Endothelial cell of umbilical vein (primary cell): ENCODE measurements at regions of chr3 and their contacts with region 1.

Region 1: DNA sequence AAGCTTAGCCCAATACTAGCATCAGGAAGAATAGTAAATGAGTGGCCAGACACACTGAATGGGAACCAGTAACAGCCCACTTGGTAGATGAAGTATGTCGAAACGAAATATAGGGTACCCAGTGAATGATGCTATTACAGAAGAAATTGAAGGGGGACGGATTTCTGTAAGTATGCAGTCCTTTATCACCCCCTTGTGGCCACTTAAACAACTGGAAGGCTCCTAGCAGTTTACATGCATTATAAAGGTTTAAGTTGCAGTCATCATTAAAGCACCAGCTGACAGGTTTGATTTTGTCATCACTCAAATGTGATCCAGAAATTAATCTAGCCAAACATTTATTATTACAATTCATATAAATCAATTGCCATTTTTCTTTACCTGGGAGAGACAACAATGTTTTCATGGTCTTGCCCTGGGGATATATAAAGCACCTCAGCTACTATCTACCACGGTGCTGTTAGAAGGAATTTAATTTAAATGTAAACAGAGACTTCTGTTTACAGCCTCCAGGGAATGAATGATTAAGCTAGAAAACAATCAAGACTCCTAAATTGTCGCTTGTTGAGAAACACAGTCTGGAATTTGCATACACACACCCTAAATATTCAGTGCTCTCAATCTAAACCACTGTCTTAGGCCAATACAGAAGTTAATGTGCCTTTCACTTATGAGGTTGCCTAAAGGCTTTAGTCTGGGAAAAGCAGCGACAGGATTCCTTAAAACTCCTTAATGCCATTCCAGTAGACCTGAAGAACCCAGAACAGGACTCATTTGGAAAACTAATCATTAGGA is 7.8 kb downstream of the EIF1B start:
- DNase-seq: peak; percentile 64
- H3K4me3 ChIP-seq: no peak overlapping the region
- H3K27ac ChIP-seq: no peak overlapping the region
- H3K4me1 ChIP-seq: no peaks in the 10 kb centered on the region
- H3K27me3 ChIP-seq: no peaks in the 10 kb centered on the region
- CTCF ChIP-seq: peak; percentile 61 to 75
- POLR2A ChIP-seq: no peak

Region 2: GRCh38 chr3:39414421-39414907 is 902.8 kb before region 1 on chr3:
- CTCF ChIA-PET with region 1: no interaction called
- POLR2A ChIA-PET with region 1: no interaction called
- dilution Hi-C with region 1: no loop called
- intact Hi-C with region 1: loop called (anchors 10 kb)
- DNase-seq: no peak
- H3K4me3 ChIP-seq: no peak overlapping the region
- H3K27ac ChIP-seq: no peak overlapping the region
- H3K4me1 ChIP-seq: peaks cover 5% of the 10 kb centered on the region
- H3K27me3 ChIP-seq: no peaks in the 10 kb centered on the region
- CTCF ChIP-seq: no peak
- POLR2A ChIP-seq: peak; percentile 85

Region 3: GRCh38 chr3:39990532-39990931 is 326.7 kb before region 1 on chr3:
- CTCF ChIA-PET with region 1: no interaction called
- POLR2A ChIA-PET with region 1: no interaction called
- dilution Hi-C with region 1: no loop called
- intact Hi-C with region 1: loop called (anchors 2 kb)
- DNase-seq: peak; percentile 70
- H3K4me3 ChIP-seq: no peak overlapping the region
- H3K27ac ChIP-seq: no peak overlapping the region
- H3K4me1 ChIP-seq: no peaks in the 10 kb centered on the region
- H3K27me3 ChIP-seq: no peaks in the 10 kb centered on the region
- CTCF ChIP-seq: peak; percentile 34 to 36
- POLR2A ChIP-seq: no peak

Region 4: DNA sequence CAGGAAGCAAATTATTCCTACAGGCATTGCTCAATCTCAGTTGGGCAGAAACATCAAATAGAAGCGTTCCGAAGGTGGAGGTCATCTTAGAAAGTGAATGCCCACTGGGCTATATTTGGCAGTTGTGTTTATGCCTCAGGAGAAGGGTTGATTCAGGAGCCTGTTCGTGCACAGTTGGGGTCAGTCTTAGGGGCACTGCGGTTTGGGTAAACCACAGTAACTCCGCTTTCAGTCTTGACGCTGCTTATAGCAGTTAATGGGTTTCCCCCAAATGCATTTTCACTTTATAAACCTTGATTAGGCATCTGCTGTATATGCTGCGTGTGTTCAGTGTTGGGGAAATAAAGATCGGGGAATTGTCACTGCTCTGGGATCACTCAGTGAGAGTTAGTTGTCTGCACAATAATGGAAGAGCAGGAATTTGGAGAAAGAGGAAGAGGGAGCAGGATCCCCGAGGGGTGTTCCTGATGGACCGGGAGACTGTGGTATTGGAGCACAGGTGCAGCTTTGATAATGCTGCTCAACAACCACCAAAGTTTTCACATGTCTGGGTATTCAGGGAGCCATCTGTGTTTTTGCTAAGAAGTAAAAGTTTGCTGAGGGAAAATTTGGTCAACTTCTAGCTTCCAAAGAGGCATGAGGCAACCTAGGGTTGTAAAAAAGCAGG is 132.1 kb before region 1 on chr3:
- CTCF ChIA-PET with region 1: interaction called, 261 read pairs
- POLR2A ChIA-PET with region 1: interaction called, 3 read pairs
- dilution Hi-C with region 1: no loop called
- intact Hi-C with region 1: no loop called
- DNase-seq: no peak
- H3K4me3 ChIP-seq: no peak overlapping the region
- H3K27ac ChIP-seq: no peak overlapping the region
- H3K4me1 ChIP-seq: no peaks in the 10 kb centered on the region
- H3K27me3 ChIP-seq: no peaks in the 10 kb centered on the region
- CTCF ChIP-seq: no peak
- POLR2A ChIP-seq: no peak

Region 5: DNA sequence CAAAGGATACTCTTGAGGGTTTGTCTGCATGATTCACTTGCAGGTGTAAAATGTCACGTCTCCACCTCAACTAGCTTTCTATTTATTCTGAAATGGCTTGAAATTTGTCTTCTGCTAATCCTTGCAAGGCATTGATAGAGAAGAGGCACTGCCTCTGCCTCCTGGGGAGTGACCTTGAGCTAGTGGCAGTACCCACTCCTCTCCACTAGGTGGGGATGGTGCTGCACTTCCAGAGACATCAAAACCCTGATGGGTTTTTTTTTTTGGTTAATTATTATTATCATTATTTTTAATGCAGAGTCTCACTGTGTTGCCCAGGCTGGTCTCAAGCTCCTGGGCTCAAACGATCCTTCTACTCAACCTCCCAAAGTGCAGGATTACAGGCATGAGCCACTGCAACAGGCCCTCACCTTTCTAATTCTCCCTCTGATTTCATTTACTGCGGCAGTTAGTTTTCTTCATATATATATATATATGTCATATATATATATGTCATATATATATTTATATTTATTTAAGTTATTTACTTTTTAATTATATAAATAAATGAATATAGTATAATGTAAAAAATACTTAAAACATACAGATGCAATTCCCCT is 125.3 kb before region 1 on chr3:
- CTCF ChIA-PET with region 1: interaction called, 261 read pairs
- POLR2A ChIA-PET with region 1: no interaction called
- dilution Hi-C with region 1: no loop called
- intact Hi-C with region 1: loop called (anchors 1 kb)
- DNase-seq: peak; percentile 63
- H3K4me3 ChIP-seq: no peak overlapping the region
- H3K27ac ChIP-seq: no peak overlapping the region
- H3K4me1 ChIP-seq: no peaks in the 10 kb centered on the region
- H3K27me3 ChIP-seq: no peaks in the 10 kb centered on the region
- CTCF ChIP-seq: peak; percentile 76 to 88
- POLR2A ChIP-seq: no peak

Region 6: DNA sequence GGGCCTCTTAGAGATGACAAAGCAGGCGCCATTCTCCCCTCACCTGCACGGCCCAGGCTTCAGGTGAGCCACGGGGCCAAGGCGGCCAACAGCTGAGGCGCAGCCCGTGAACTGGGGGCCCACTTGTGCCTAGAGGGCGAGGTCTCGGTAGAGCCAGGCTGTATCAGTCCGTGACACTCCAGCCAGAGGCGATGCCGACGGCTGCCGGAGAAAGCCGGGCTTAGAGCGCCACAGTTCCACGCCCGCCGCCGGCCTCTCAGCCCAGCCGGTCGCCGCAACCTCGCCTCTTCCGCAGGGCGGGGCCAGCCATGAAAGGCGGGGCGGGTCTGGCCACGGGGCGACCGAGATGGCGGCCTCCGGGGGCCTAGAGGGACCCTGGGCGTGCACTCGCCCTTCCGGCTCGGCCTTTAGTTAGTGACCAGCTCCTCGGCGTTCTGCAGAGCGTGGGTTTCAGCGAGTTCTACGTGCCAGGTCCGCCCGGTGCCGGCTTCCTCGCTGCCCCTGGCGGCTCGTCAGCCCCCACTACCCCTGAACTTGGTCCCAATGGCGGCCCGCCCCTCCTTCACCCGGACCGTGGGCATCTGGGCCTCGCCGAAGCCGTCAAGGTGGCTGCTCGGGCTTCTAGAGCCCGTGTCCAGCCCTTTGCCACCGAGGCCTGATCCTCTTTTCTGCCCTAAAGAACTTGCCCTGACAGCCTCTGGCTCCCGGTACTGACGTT is 207.5 kb after region 1 on chr3 and contains the start of gene ZNF621:
- CTCF ChIA-PET with region 1: no interaction called
- POLR2A ChIA-PET with region 1: no interaction called
- dilution Hi-C with region 1: no loop called
- intact Hi-C with region 1: loop called (anchors 1 kb)
- DNase-seq: peak; percentile 87
- H3K4me3 ChIP-seq: peak within 1 kb of the TSS; percentile 69 to 91 (median 84)
- H3K27ac ChIP-seq: peak within 1 kb of the TSS; percentile 71
- H3K4me1 ChIP-seq: peaks cover 14% of the 10 kb centered on the region
- H3K27me3 ChIP-seq: no peaks in the 10 kb centered on the region
- CTCF ChIP-seq: no peak
- POLR2A ChIP-seq: peak; percentile 94
- total RNA-seq, gene ZNF621: 20.6 and 22.5 TPM in 2 replicates